ENCODE measurements at regions of chr10 and their contacts with region 1.

Region 1: DNA sequence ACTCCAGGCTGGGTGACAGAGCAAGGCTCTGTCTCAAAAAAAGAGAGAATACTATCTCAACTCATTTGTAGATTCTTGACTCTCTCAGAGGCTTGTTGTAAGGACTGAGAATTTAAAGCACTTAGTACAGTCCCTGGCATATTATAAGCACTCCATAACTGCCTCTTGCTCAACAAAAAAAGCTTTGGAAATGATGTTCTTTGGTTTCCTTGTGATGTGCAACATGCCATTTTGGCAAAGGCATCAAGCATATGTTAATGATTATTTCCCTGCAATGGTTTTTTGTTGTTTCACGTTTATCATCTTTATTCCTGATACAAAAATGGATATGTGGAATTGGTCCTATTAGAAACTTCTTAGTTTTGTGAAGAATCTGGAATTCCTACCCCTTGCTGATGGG is 15.7 kb downstream of the NOLC1 start:
- DNase-seq: no peak
- H3K4me3 Mint-ChIP-seq: no peak overlapping the region
- H3K27ac Mint-ChIP-seq: no peak overlapping the region
- H3K4me1 Mint-ChIP-seq: peaks cover 8% of the 10 kb centered on the region
- H3K27me3 Mint-ChIP-seq: peaks cover 2% of the 10 kb centered on the region

Region 2: DNA sequence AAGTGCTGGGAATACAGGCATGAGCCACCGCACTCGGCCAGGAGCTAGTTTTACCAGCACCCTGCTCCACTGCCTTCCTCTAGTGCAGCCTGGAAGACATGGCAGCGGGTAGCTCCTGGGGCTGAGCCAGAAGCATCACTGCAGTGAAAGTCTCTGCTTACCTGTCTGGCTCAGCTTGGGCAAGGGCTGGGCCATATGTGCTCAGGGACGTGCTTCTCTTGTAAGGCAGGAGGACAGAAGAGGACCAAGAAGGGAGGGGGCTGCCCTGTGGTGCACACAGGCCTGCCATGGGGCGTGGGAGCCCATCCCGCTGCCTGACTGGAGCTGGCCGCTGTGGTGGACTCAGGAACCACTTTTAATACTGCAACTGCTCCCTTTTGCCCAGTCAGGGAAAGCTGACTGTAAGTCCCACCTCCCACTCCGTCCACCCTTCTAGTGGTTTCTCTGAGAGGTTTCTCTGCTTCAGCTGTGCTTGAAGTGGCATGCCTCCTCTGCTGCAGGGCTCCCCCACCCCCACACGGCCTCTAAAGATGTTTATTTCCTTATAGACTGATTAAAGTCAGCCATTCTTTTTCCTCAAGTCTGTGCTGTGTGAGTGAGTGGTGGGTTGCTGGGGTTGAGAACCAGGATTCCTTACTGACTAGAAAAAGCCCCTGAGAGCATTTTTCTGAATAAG is 308.7 kb after region 1 on chr10:
- intact Hi-C with region 1: loop called (anchors 5 kb)
- DNase-seq: no peak
- H3K4me3 Mint-ChIP-seq: no peak overlapping the region
- H3K27ac Mint-ChIP-seq: peak overlapping the region; percentile 70
- H3K4me1 Mint-ChIP-seq: peaks cover 22% of the 10 kb centered on the region
- H3K27me3 Mint-ChIP-seq: no peaks in the 10 kb centered on the region

Measured in activated CD4-positive, alpha-beta T cell treated with anti-CD3 and anti-CD28 coated beads, Interleukin-2, amount 10 ng/mL, durations not matched to agents 24 days and 14 days (primary cell).